Tibial artery (tissue), 4 donors: ENCODE measurements at regions of chr5 and their contacts with region 1.

Region 1: DNA sequence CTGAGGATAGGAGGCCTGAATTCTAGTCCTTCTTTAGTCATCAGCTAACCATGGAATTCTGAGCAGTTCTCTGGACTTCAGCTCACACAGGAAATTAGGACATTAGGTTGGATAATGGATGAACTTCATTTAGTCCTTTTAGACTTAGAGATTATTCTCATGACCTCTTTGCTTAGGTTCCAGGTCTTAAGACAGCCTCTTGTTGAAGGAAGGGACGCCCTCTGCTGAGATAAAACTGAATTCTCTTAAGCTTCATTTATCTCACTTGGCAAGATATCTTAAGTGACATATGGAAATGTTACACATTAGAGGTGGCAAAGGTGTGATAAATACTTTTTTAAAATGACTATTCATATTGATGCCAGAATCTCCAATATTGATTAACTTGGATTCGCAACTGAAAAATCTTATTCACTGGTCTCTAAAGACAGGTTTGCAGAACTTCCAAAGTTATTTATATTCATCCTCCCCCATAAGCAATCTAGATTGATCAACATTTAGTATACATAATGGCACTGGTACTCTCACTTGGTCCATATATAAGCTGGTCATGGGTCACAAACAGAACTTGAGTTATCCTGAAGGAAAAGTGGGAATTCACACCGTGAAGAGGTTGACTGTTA is 16.9 kb upstream of the ZNF366 start:
- DNase-seq: no peak
- H3K4me3 ChIP-seq: no peak overlapping the region
- H3K27ac ChIP-seq: no peak overlapping the region
- H3K4me1 ChIP-seq: peaks cover 0 to 3% (median 0%) of the 10 kb centered on the region in 4 donors
- H3K27me3 ChIP-seq: no peaks in the 10 kb centered on the region
- CTCF ChIP-seq: peak; percentile 57 to 76

Region 2: GRCh38 chr5:72353046-72353445 is 171.0 kb before region 1 on chr5:
- intact Hi-C with region 1: no loop called
- DNase-seq: no peak
- H3K4me3 ChIP-seq: no peak overlapping the region
- H3K27ac ChIP-seq: no peak overlapping the region
- H3K4me1 ChIP-seq: no peaks in the 10 kb centered on the region
- H3K27me3 ChIP-seq: no peaks in the 10 kb centered on the region
- CTCF ChIP-seq: no peak

Region 3: DNA sequence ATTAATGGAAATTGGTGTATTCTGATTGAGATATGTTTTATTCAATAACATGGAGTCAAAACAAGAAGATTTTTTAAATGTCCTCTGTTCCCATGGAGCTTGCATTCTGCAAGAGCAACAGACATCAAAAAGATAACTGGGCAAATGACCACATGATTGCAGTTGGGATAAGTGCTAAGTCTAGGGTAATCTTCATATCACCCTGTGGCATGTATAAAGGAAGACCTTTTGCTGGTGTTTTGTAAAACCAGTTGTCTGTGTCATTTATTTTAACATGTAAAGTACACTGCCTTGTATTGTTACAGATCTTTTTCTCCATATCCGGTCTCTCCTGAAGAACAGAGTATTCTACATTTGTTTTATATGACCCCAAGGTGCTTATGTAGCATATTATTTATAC is 159.9 kb before region 1 on chr5:
- intact Hi-C with region 1: loop called (anchors 2 kb)
- DNase-seq: no peak
- H3K4me3 ChIP-seq: no peak overlapping the region
- H3K27ac ChIP-seq: no peak overlapping the region
- H3K4me1 ChIP-seq: peaks cover 0 to 24% (median 9%) of the 10 kb centered on the region in 4 donors
- H3K27me3 ChIP-seq: no peaks in the 10 kb centered on the region
- CTCF ChIP-seq: no peak

Region 4: DNA sequence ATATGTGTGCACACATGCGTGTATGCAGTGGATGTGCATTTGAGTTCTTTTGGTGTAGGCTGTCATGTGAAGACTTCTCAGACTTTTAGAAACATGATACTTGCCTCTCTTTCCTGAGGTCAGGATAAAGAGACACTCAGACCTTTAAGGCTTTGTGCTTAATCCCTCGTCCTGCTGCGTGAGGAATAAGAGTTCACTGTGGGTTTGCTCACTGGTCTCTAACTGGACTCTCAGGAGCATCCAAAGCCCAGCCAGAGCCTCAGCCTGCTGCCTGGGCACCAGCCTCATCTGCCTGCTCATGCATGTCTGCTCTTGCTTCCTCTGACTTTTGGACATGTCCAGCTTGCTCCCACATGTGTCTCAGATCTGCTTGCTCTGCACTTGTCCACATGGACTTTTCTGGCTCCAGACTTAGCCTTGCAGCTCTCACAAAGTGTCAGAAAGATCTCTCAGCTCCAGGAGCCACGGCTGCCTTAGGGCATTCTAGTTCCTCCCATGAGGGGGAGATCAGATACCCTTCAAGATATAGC is 48.2 kb after region 1 on chr5:
- intact Hi-C with region 1: no loop called
- DNase-seq: no peak
- H3K4me3 ChIP-seq: no peak overlapping the region
- H3K27ac ChIP-seq: no peak overlapping the region
- H3K4me1 ChIP-seq: no peaks in the 10 kb centered on the region
- H3K27me3 ChIP-seq: no peaks in the 10 kb centered on the region
- CTCF ChIP-seq: no peak